ENCODE measurements at regions of chr19 and their contacts with region 1.

Region 1: GRCh38 chr19:54168174-54168917 is 4.6 kb downstream of the TMC4 start:
- DNase-seq: peak; percentile 90 to 95
- H3K4me3 ChIP-seq: no peak overlapping the region
- H3K4me3 Mint-ChIP-seq: no peak overlapping the region
- H3K27ac Mint-ChIP-seq: no peak overlapping the region
- H3K4me1 ChIP-seq: peaks cover 1% of the 10 kb centered on the region
- H3K4me1 Mint-ChIP-seq: peaks cover 30% of the 10 kb centered on the region
- H3K27me3 ChIP-seq: no peaks in the 10 kb centered on the region
- H3K27me3 Mint-ChIP-seq: no peaks in the 10 kb centered on the region
- CTCF ChIP-seq: peak; percentile 90 to 92

Region 2: GRCh38 chr19:54209811-54210494 is 41.6 kb after region 1 on chr19:
- CTCF ChIA-PET with region 1: interaction called, 3 read pairs
- POLR2A ChIA-PET with region 1: interaction called, 5 read pairs
- intact Hi-C with region 1: loop called (anchors 2 kb)
- DNase-seq: peak; percentile 70 to 79
- H3K4me3 ChIP-seq: no peak overlapping the region
- H3K4me3 Mint-ChIP-seq: peak overlapping the region; percentile 45
- H3K27ac Mint-ChIP-seq: peak overlapping the region; percentile 78
- H3K4me1 ChIP-seq: peaks cover 65% of the 10 kb centered on the region
- H3K4me1 Mint-ChIP-seq: peaks cover 41% of the 10 kb centered on the region
- H3K27me3 ChIP-seq: no peaks in the 10 kb centered on the region
- H3K27me3 Mint-ChIP-seq: no peaks in the 10 kb centered on the region
- CTCF ChIP-seq: no peak

Region 3: DNA sequence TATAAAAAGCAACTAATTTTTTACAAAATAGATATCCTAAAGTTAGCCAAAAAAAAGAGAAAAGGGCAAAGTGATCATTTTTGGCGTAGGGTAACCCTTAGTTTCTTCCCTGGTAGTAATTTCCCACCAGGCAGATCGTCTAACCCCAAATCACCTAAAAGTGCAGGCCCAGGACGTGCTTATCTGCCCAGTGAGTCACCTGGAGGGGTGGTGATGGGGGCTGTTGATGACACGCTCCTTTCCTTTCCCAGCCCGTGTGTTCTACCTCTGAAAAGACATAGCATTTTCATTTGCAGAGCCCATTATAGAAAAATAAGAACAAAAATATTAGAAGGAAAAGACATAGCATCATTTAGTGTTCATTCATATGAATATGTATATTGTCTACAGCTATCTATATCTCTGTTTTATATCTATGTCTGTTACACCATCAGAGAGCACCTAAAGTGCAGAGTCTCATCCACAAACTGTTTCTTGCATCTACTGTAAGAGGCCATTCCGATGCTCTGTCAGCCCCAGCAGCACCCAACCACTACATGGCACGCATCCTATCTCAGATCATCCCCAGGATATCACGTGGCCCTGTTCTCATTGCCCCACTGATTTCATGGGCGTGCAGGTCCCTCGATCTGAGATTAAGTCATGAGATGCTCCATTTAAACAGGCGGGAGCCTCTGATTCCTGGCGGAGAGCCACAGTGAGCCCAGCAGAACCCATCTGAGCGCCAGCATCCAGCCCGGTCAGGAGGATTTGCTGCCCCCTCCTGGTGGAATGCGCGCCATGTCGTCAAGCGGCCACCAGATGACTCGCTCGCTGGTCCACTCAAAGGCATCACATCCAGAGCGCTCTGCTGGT is 63.0 kb after region 1 on chr19:
- CTCF ChIA-PET with region 1: interaction called, 3 read pairs
- POLR2A ChIA-PET with region 1: no interaction called
- intact Hi-C with region 1: loop called (anchors 1 kb)
- DNase-seq: peak; percentile 86 to 91
- H3K4me3 ChIP-seq: no peak overlapping the region
- H3K4me3 Mint-ChIP-seq: no peak overlapping the region
- H3K27ac Mint-ChIP-seq: no peak overlapping the region
- H3K4me1 ChIP-seq: peaks cover 9% of the 10 kb centered on the region
- H3K4me1 Mint-ChIP-seq: peaks cover 24% of the 10 kb centered on the region
- H3K27me3 ChIP-seq: no peaks in the 10 kb centered on the region
- H3K27me3 Mint-ChIP-seq: peaks cover 3% of the 10 kb centered on the region
- CTCF ChIP-seq: peak; percentile 87 to 90

Region 4: GRCh38 chr19:54266133-54266532 is 97.8 kb after region 1 on chr19:
- CTCF ChIA-PET with region 1: interaction called, 6 read pairs
- POLR2A ChIA-PET with region 1: no interaction called
- intact Hi-C with region 1: loop called (anchors 1 kb)
- DNase-seq: peak; percentile 87 to 89
- H3K4me3 ChIP-seq: no peak overlapping the region
- H3K4me3 Mint-ChIP-seq: no peak overlapping the region
- H3K27ac Mint-ChIP-seq: no peak overlapping the region
- H3K4me1 ChIP-seq: no peaks in the 10 kb centered on the region
- H3K4me1 Mint-ChIP-seq: no peaks in the 10 kb centered on the region
- H3K27me3 ChIP-seq: no peaks in the 10 kb centered on the region; the same call in 1 of the 2 replicates
- H3K27me3 Mint-ChIP-seq: peaks cover 18% of the 10 kb centered on the region
- CTCF ChIP-seq: peak; percentile 76 to 90

Measured in Caco-2 (cell line).